GM10248 (cell line): ENCODE measurements at regions of chr14 and their contacts with region 1.

Region 1: GRCh38 chr14:106823552-106823951 is 1297.2 kb downstream of the TMEM121 start:
- DNase-seq: no peak
- CTCF ChIP-seq: no peak

Region 2: DNA sequence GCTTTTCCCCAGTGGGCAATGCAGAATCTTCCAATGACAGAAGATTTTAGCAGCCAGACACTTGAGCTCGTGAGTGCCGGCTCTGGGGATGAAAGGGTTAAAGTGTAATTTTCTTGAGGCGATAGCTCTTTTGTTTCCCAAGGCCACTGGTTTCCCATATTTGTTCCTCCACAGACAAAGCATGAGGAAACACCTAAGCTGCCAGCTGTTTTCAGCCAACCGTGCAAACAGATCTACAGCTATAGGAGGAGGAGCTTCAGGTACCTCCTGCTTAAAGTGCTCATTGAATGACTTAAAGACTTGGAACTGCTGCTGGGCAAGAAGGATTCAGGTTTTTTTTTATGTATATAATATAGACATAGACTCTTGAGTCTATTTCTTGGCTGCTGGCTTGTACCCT is 14.3 kb after region 1 on chr14:
- CTCF ChIA-PET with region 1: interaction called, 541 read pairs
- POLR2A ChIA-PET with region 1: no interaction called
- DNase-seq: no peak
- CTCF ChIP-seq: no peak

Region 3: DNA sequence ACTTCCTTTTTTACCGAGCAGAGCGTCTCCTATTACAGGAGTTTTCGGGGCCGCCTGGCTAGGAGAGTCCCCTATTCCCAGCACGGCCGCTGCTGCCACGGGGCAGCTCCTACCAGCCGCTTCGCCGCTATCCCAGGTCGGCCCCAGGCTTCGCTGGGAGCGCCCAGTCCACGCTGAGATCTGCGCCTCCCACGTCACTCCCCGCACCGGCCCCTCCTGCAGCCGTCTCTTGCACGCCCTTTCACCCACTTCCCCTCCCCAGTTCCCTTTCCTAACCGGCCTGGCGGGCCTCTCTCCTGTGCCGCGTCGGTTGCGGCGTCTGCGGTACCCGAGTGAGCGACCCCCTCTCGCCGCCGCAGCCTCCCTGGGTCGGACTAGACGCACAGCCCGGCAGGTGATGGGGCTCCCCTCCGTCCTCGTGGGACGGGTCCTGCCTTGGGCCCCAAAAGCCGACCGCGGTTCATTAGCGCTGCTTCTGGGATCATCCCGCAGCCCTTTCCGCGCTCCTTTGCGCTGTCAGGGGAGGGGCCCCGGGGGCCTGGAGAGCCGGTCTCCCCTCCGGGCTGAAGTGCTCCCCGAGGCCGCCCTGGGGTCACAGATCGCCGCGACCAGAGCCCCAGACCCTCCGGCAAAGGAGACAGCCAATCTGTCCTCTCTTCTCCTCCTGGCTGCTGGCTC is 21.2 kb after region 1 on chr14:
- CTCF ChIA-PET with region 1: interaction called, 541 read pairs
- POLR2A ChIA-PET with region 1: no interaction called
- DNase-seq: peak; percentile 77
- CTCF ChIP-seq: no peak